Spleen (tissue), 13 donors: ENCODE measurements at regions of chr3 and their contacts with region 1.

Region 1: GRCh38 chr3:49171119-49171774 is at the start of gene KLHDC8B:
- DNase-seq: peak; percentile 95
- H3K4me3 ChIP-seq: peak within 1 kb of the TSS; percentile 39 to 88 (median 54)
- H3K27ac ChIP-seq: peak within 1 kb of the TSS; percentile 27 to 87 (median 76)
- H3K4me1 ChIP-seq: peaks cover 7 to 63% (median 46%) of the 10 kb centered on the region in 6 donors
- H3K27me3 ChIP-seq: no peaks in the 10 kb centered on the region
- CTCF ChIP-seq: peak; percentile 80 to 98 (median 96)
- POLR2A ChIP-seq: no peak
- total RNA-seq, gene KLHDC8B: 18.6 to 29.2 (median 21.9) TPM

Region 2: DNA sequence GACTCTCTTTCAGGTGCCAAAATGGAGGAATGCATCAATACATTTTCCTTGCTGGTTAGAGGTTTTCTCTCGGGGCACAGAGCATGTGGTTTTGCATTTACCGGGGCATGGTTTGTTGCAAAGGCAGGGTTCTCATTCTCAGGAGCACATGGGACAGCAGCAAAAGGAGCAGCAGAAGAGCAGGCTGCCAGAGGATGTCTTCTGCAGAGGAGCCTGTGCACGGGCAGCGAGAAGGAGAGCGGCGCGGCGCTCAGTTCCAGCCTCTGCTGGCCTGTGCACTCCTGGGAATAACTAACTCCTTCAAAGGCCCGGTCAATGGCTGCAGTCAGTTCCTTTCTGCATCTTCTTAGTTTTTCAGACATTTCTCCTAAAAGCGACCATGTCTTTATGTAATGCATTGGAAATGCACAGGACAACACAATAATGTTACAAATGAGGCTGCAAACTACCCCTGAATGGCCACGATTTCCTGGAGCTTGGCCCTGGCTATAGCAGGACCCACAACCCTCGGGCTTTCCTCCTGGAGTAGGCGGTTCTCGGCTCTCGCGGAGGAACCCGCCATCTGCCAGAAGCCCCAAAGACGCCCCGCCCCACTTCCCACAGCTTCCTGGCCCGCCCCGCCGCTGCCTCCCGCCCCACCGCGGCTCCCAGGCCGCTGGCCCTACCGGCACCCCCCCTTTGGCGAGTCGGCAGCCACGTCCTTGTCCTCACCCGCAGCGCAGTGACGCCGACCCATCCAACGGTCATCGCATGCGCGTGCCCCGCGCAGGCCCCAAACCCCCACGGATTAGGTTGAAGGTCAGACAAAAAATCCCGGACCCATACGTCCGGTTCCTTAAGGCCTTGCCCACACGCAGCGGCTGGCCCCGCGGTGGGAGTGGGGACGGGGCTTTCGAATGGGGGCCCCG is 105.5 kb after region 1 on chr3 and contains the start of gene C3orf62:
- intact Hi-C with region 1: loop called (anchors 5 kb)
- DNase-seq: peak; percentile 96
- H3K4me3 ChIP-seq: peak within 1 kb of the TSS; percentile 9 to 67 (median 46)
- H3K27ac ChIP-seq: peak within 1 kb of the TSS; percentile 88 to 94 (median 92)
- H3K4me1 ChIP-seq: peaks cover 10 to 44% (median 30%) of the 10 kb centered on the region in 6 donors
- H3K27me3 ChIP-seq: no peaks in the 10 kb centered on the region
- CTCF ChIP-seq: no peak
- POLR2A ChIP-seq: no peak
- total RNA-seq, gene C3orf62: 7.6 to 15.0 (median 9.3) TPM